HEK293 (cell line): ENCODE measurements at regions of chr12 and their contacts with region 1.

Region 1: DNA sequence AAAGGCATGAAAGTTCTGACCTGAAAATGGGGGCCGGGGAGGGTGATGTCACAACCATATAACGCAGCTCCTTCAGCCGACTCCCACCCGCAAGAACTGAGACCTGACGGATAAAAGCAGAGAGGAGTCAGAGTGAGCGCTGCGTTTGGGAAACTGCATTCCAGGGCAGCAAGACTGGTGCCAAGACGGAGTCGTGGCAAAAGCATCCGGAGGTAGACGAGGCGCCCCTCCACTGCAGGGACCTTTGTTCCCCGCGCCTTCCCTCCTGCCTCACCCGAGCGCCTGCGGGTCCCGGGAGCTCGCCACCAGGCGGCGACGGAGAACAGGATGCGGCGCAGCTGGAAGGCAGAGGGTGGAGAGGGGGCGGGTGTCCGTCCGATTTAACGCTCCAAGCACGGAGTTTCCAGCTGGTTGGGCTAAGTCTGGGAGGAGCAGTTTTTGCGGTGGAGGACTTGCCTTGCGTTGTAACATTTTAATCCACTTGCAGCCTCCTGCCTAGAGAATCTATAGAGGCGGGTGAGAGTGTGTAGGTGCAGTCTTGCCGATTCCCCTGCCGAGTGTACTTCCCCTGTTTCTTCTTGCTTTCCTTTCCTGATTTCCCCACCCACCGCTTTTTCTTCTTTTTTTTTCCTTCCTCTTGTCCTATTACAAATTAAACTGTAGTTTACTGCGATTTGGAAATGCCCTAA is 1.2 kb upstream of the CPNE8 start:
- H3K4me3 ChIP-seq: peak overlapping the region; percentile 70
- H3K27ac ChIP-seq: peak overlapping the region; percentile 99
- H3K4me1 ChIP-seq: peaks cover 7% of the 10 kb centered on the region
- CTCF ChIP-seq: peak; percentile 98

Region 2: DNA sequence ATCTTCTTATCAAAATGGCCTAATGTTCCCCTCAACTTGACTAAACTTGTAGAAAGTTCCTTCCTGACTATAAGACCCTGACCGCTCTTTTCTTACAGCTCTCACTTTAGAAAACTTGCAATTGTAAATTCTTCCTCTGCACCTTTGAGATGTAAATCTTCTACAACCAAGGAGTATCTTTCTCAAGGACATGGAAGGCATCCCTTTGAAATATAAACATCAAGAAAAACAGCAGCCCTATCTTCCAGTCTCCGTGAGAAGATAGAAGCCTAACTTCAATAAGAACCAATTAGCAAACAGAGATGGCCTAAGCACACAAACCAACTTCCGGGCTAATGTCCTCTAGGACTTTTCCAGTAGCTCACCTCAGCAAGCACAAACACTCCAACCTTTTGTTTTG is 211.6 kb before region 1 on chr12:
- CTCF ChIA-PET with region 1: no interaction called
- POLR2A ChIA-PET with region 1: no interaction called
- H3K4me3 ChIP-seq: no peak overlapping the region
- H3K27ac ChIP-seq: no peak overlapping the region
- H3K4me1 ChIP-seq: no peaks in the 10 kb centered on the region
- CTCF ChIP-seq: no peak

Region 3: DNA sequence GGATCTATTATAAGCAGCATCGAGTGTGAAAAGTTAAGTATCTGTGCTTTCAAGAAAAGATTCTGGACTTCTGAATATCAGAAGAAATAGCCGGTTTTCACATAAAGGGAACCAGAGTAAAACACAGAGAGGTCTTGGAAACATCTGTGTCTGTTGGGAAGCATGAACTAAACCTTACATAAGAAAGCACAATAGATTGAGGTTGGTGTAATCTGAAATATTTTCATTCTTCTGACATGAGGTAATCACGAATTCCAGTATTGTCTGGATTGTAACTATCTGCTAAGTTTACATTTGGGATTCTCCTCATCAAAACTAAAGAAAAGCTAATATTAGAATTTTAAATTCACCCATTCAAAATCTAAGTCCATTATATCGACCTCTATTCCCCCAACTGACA is 162.6 kb before region 1 on chr12:
- CTCF ChIA-PET with region 1: no interaction called
- POLR2A ChIA-PET with region 1: no interaction called
- H3K4me3 ChIP-seq: no peak overlapping the region
- H3K27ac ChIP-seq: no peak overlapping the region
- H3K4me1 ChIP-seq: no peaks in the 10 kb centered on the region
- CTCF ChIP-seq: no peak

Region 4: DNA sequence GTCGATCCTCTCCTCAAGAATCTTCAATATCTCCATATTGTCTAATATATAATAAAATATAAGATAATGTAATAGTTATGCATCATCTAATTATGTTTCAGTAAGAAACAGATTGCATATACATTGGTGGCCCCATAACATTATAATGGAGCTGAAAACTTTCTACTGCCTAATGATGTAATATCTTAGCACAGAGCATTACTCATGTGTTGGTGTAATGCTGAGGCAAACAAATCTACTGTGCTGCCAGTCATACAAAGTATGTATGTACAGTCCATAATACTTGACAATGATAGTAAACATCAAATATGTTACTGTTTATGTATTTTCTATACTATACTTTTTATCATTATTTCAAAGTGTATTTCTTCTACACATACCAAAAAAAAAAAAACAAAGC is 130.0 kb before region 1 on chr12:
- CTCF ChIA-PET with region 1: interaction called, 10 read pairs
- POLR2A ChIA-PET with region 1: no interaction called
- H3K4me3 ChIP-seq: no peak overlapping the region
- H3K27ac ChIP-seq: no peak overlapping the region
- H3K4me1 ChIP-seq: no peaks in the 10 kb centered on the region
- CTCF ChIP-seq: no peak

Region 5: GRCh38 chr12:38895446-38895845 is 11.2 kb before region 1 on chr12:
- CTCF ChIA-PET with region 1: interaction called, 4 read pairs
- POLR2A ChIA-PET with region 1: interaction called, 10 read pairs
- H3K4me3 ChIP-seq: no peak overlapping the region
- H3K27ac ChIP-seq: no peak overlapping the region
- H3K4me1 ChIP-seq: peaks cover 4% of the 10 kb centered on the region
- CTCF ChIP-seq: no peak

Region 6: GRCh38 chr12:38921025-38921677 is 14.5 kb after region 1 on chr12:
- CTCF ChIA-PET with region 1: interaction called, 25 read pairs
- POLR2A ChIA-PET with region 1: no interaction called
- H3K4me3 ChIP-seq: no peak overlapping the region
- H3K27ac ChIP-seq: no peak overlapping the region
- H3K4me1 ChIP-seq: no peaks in the 10 kb centered on the region
- CTCF ChIP-seq: peak; percentile 46; the same call in 1 of the 2 replicates

Region 7: DNA sequence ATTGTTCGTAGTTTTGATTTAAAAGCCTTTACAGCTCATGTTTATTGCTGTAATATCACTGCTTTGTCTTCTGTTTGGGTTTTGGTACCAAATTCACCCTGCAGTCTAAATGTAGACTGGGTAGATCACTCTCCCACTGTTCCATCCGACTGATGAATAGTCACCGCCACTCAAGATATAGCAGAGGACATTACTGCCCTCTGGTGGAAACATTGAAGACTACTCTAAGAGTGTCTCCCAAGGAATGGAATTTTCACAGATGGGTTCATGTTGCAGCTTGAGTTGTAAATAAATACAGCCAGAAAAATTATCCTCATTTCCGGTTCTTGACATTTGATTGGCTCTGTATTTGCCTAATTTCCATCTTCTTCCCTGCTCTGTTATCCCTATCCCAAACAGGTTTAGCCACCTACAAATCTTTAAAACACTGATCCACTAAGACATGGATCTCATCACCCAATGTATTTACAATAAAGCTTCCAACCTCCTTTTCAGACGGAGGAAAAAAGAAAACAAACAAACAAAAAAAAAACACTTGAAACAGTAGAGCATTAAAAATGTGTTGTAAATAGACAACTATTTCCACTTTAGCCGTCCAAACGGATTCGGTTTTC is 197.0 kb after region 1 on chr12:
- CTCF ChIA-PET with region 1: interaction called, 25 read pairs
- POLR2A ChIA-PET with region 1: no interaction called
- H3K4me3 ChIP-seq: no peak overlapping the region
- H3K27ac ChIP-seq: no peak overlapping the region
- H3K4me1 ChIP-seq: no peaks in the 10 kb centered on the region
- CTCF ChIP-seq: peak; percentile 73

Region 8: GRCh38 chr12:39116867-39117266 is 210.2 kb after region 1 on chr12:
- CTCF ChIA-PET with region 1: interaction called, 12 read pairs
- POLR2A ChIA-PET with region 1: no interaction called
- H3K4me3 ChIP-seq: no peak overlapping the region
- H3K27ac ChIP-seq: no peak overlapping the region
- H3K4me1 ChIP-seq: no peaks in the 10 kb centered on the region
- CTCF ChIP-seq: no peak